OCI-LY7 (cell line): ENCODE measurements at regions of chr2 and their contacts with region 1.

Region 1: GRCh38 chr2:48287976-48288375 is 242.0 kb upstream of the STON1 start:
- DNase-seq: peak; percentile 45
- H3K4me3 ChIP-seq: no peak overlapping the region
- H3K27ac ChIP-seq: no peak overlapping the region
- H3K4me1 ChIP-seq: peaks cover 4% of the 10 kb centered on the region
- CTCF ChIP-seq: no peak

Region 2: GRCh38 chr2:48240912-48241311 is 47.1 kb before region 1 on chr2:
- CTCF ChIA-PET with region 1: no interaction called
- POLR2A ChIA-PET with region 1: no interaction called
- intact Hi-C with region 1: loop called (anchors 5 kb)
- DNase-seq: no peak
- H3K4me3 ChIP-seq: no peak overlapping the region
- H3K27ac ChIP-seq: no peak overlapping the region
- H3K4me1 ChIP-seq: no peaks in the 10 kb centered on the region
- CTCF ChIP-seq: no peak

Region 3: DNA sequence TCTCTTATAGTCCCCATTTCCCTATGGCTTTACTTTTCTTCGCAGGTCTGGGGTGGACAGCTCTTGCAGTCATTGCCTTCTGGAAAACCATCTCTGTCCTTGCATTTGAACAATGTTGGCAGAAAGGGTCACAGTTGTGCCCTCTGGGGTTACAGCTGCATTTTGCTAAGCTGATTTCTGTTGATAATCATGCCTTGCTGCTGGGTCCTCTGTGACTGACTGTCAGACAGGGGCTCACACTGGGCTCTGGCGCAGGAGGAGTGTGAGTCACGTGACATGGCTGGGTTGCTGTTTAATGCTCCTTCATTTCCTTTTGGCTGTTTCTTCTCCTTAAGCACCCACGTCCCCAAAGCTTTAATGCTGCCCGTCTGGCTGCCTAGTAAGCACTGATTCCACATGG is 664.2 kb after region 1 on chr2:
- CTCF ChIA-PET with region 1: no interaction called
- POLR2A ChIA-PET with region 1: no interaction called
- intact Hi-C with region 1: no loop called
- DNase-seq: no peak
- H3K4me3 ChIP-seq: no peak overlapping the region
- H3K27ac ChIP-seq: no peak overlapping the region
- H3K4me1 ChIP-seq: no peaks in the 10 kb centered on the region
- CTCF ChIP-seq: no peak